HEK293T (cell line): ENCODE measurements at regions of chr14 and their contacts with region 1.

Region 1: DNA sequence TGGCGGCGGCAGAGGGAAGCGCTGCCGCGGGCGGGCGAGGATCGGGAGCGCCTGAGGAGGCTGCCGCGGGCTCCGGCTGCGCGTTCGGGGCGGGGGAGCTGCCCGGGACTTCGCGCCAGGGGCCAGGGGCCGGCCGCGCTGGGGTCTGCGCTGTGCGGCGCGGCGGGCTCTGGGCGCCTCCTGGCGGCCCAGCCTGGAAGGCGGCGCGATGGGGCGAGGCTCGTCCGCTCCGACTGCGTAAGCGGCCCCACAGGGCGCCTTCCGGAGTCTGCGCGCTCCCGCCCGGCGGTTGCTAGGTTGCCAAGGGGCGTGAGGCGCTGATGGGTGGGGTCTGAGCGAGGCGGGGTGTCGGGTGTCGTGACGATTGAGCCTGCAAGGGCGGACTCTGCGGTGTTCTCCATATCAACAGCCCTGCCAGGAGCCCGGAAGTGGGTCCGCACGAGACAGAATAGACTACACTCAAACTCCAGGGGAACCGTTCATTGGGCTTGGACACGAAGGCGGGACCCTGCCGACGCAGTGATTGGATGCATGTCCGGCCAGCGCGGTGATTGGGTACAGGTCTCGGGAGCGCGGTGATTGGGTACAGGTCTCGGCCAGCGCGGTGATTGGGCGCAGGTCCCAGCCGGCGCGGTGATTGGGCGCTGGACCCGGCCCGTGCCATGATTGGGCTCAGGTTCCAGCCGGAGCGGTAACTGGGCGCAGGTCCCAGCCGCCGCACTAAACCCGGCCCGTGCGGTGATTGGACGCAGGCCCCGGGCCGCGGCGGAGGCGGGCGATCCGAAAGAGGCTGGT is at the start of gene TEDC1:
- DNase-seq: peak; percentile 91

Region 2: GRCh38 chr14:105369653-105370040 is 121.1 kb before region 1 on chr14:
- CTCF ChIA-PET with region 1: interaction called, 22 read pairs
- POLR2A ChIA-PET with region 1: interaction called, 9 read pairs
- DNase-seq: no peak

Region 3: GRCh38 chr14:105470804-105471610 is 19.8 kb before region 1 on chr14:
- CTCF ChIA-PET with region 1: interaction called, 19 read pairs
- POLR2A ChIA-PET with region 1: interaction called, 9 read pairs
- DNase-seq: peak; percentile 42

Region 4: DNA sequence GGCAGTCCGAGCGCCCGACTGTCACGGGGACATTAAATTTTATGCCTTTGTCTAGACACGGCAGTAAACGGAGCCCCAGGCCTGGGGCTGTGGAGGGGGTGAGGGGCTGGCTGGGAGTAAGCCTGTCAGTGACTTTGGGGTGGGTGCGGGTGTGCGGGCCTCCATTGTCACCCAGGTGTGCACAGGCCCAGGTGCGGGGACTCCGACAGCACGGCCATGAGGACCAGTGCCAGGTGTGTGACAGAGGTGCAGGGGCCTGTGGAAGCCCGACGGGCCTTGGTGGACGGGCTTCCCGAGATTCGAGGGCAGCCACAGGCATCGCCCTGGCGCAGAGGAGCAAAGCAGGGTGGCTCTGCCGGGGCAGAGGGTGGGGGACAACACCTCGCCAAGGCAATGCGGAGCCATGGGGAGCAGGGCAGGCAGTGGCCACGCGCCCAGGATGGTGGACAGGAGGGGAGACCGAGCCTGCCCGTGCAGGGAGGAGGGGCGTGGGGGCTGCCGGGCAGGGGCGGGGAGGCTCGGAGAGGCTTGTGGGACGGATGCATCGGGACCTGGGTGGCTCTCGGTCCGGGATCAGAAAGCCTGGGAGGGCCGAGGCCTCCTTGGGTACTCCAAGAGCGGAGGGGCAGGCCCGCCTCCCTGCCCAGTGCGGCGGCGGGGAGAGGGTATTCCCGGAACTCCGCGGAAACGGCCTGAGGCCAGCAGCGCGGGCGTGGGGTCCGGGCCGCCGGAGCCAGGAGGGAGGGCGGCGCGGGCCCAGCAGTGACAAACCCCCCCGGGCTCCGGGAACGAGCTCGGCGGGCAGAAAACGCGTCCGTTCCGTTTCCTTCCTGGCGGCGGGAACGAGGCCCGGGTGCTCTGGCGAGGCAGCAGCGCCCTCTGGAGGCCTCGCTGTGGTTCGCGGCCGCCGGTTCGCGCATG is 37.2 kb after region 1 on chr14:
- CTCF ChIA-PET with region 1: interaction called, 7 read pairs
- POLR2A ChIA-PET with region 1: interaction called, 14 read pairs
- DNase-seq: peak; percentile 92

Region 5: DNA sequence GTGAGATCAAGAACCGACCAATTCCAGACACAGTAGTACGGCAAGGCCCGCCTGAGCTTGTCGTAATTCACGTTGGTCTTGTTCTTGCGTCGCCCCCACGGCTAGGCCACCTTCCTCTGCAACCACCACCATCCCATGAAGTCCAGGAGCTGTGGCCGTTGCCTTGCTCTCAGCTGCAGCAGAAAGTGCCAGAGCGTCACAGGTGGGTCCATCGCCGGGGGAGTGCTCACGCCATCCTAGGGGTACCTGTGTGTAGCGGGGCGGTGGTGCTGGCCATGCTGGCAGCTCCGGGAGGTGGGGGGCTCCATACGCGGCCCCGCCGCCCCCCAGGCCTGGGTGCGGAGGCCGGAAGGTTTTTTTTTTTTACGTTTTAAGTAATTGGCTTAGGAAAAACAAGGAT is 58.7 kb after region 1 on chr14:
- CTCF ChIA-PET with region 1: no interaction called
- POLR2A ChIA-PET with region 1: no interaction called
- DNase-seq: no peak